ENCODE measurements at regions of chr20 and their contacts with region 1.

Region 1: DNA sequence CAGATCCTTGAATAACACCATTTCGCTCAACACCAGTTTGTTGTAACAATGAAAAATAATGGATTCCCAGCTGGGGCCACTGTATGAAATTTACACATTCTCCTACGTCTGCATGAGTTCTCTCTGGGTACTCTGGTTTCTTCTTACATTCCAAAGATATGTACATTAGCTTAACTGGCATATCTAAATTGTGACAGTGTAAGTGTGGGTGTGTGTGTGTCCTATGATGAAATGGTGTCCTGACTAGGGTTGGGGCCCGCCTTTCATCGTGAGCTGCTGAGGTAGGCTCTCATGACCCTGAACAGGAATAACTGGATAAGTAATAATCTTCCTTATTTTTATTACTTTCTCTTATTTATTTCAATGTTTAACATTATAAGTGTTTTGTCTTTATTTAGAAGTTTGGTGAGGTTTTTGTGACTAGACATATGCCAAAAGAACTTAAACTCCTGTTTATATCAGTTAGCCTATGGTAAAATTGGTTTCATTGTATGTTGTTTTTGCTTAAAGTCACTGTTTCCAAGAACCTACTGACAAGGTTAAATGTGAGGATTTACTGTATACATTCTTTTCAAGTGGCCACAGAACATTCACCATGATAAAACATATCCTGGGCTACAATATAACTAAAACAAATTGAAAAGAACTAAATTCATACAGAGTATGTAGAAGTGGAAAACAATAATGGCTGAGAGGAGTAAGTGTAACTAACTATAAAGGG is 42.4 kb downstream of the RBL1 start:
- DNase-seq: no peak
- H3K4me3 ChIP-seq: no peak overlapping the region
- H3K27ac ChIP-seq: no peak overlapping the region
- H3K4me1 ChIP-seq: no peaks in the 10 kb centered on the region
- CTCF ChIP-seq: no peak

Region 2: GRCh38 chr20:36847009-36847709 is 206.2 kb before region 1 on chr20:
- CTCF ChIA-PET with region 1: no interaction called
- POLR2A ChIA-PET with region 1: no interaction called
- intact Hi-C with region 1: no loop called
- DNase-seq: no peak
- H3K4me3 ChIP-seq: no peak overlapping the region
- H3K27ac ChIP-seq: peak overlapping the region; percentile 93
- H3K4me1 ChIP-seq: peaks cover 89% of the 10 kb centered on the region
- CTCF ChIP-seq: no peak

Region 3: DNA sequence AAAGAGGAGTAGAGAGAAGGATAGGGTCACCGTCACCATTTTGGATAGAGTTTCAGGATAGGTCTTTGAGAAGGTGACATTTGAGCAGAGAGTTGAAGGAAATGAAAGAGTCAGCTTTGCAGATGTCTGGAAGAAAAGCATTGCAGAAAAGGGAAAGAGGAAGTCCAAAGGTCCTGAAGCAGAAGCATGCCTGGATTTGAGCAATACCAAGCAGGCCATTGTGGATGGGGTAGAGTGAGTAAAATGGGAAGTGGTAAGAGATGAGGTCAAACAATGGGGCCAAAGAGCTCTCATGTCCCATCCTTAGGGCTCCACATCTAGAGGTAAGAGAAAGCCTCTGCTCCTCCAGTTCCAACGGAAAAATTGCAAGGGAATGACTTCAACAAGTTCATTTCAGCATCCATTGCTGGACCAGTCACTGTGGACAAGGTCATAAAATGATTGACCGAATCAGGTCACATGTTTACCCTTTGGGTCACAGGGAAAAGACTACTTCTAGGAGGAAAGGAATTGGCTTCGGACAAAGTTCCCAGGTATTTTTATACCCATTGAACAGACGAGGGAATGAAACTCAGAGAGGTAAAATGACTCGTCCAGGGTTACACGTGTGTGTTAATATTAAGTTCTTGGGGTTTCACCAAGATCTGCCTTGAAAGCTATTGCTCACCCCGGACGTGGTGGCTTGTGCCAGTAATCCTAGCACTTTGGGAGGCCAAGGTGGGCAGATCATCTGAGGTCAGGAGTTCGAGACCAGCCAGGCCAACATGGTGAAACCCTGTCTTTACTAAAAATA is 95.3 kb before region 1 on chr20:
- CTCF ChIA-PET with region 1: no interaction called
- POLR2A ChIA-PET with region 1: interaction called, 12 read pairs
- intact Hi-C with region 1: no loop called
- DNase-seq: no peak
- H3K4me3 ChIP-seq: no peak overlapping the region
- H3K27ac ChIP-seq: no peak overlapping the region
- H3K4me1 ChIP-seq: no peaks in the 10 kb centered on the region
- CTCF ChIP-seq: no peak

Region 4: DNA sequence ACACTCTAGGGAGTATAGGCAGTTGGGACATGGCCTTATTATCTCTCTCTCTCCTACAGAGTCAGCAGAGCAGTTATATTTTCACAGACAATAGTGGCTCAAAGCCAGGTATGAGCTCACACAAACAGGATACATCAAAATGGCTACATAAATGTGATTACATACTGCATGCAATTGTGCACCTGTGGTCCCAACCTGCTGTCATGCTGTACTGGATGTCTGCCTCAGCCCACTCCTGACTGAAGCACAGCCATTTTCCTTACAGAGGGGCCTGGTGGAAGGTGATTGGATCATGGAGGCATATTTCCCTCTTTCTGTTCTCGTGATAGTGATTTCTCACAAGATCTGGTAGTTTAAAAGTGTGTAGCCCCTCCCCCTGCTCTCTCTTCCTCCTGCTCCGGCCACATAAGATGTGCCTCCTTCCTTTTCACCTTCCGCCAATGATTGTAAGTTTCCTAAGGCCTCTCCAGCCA is 64.9 kb before region 1 on chr20:
- CTCF ChIA-PET with region 1: no interaction called
- POLR2A ChIA-PET with region 1: no interaction called
- intact Hi-C with region 1: no loop called
- DNase-seq: peak; percentile 40
- H3K4me3 ChIP-seq: peak overlapping the region; percentile 15
- H3K27ac ChIP-seq: peak overlapping the region; percentile 21
- H3K4me1 ChIP-seq: peaks cover 13% of the 10 kb centered on the region
- CTCF ChIP-seq: no peak

Region 5: GRCh38 chr20:37066168-37066567 is 12.8 kb after region 1 on chr20:
- CTCF ChIA-PET with region 1: no interaction called
- POLR2A ChIA-PET with region 1: no interaction called
- intact Hi-C with region 1: no loop called
- DNase-seq: no peak
- H3K4me3 ChIP-seq: no peak overlapping the region
- H3K27ac ChIP-seq: no peak overlapping the region
- H3K4me1 ChIP-seq: no peaks in the 10 kb centered on the region
- CTCF ChIP-seq: no peak

Measured in OCI-LY7 (cell line).